Endothelial cell of umbilical vein (primary cell): ENCODE measurements at regions of chr7 and their contacts with region 1.

Region 1: DNA sequence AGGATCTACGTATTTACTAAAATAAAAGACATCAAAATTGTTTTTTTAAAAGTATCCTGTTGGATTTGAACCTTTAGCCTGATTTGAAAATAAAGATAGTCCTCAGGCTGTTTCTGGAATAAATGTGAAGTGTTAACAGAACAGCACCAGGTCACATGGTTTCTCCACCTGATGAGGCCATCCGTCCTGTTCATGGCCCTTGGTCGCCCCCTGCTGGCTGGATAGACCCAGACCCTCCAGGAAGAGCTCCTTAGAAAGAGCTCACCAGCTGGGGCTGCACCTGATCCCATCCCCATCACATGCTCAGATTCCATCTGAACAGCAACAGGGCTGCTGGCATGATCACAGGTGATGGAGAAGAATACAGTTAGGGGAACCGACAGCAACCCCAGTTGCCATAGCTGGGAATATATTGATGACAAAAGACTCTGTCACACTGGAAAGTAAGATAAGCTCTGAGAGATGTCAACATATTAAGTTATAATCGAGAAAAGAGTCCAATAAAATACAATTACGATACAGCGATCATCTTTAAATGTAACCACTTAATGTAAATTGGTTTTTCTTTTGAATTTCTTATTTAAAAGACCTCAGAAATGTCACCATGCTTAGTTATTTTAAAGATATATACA is 4.8 kb downstream of the OR2A14 start:
- DNase-seq: peak; percentile 79
- H3K4me3 ChIP-seq: no peak overlapping the region
- H3K27ac ChIP-seq: no peak overlapping the region
- H3K4me1 ChIP-seq: no peaks in the 10 kb centered on the region
- H3K27me3 ChIP-seq: no peaks in the 10 kb centered on the region
- CTCF ChIP-seq: peak; percentile 84 to 92
- POLR2A ChIP-seq: no peak

Region 2: DNA sequence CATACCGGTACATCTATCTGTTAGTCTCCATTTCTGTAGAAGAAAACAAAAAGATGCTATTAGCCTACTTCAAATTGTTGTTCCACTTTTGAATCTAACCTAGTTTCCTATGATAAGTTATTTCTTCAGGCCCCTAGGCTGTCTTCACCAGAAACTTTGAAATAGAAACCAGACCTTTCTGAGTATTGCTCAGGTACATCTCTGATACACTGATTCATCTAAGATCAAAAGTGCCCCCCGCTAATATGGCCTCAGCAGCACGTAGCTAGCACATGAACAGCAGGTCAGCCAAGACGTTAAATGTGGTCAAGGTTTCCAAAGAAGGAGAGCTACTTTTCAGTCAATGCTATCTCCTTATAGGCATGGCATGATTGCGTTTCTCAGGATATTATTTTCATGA is 393.9 kb before region 1 on chr7:
- CTCF ChIA-PET with region 1: interaction called, 77 read pairs
- POLR2A ChIA-PET with region 1: no interaction called
- dilution Hi-C with region 1: no loop called
- intact Hi-C with region 1: loop called (anchors 1 kb)
- DNase-seq: no peak
- H3K4me3 ChIP-seq: no peak overlapping the region
- H3K27ac ChIP-seq: no peak overlapping the region
- H3K4me1 ChIP-seq: no peaks in the 10 kb centered on the region
- H3K27me3 ChIP-seq: no peaks in the 10 kb centered on the region
- CTCF ChIP-seq: no peak
- POLR2A ChIP-seq: no peak

Region 3: GRCh38 chr7:143892527-143893300 is 235.1 kb before region 1 on chr7:
- CTCF ChIA-PET with region 1: interaction called, 15 read pairs
- POLR2A ChIA-PET with region 1: no interaction called
- dilution Hi-C with region 1: no loop called
- intact Hi-C with region 1: no loop called
- DNase-seq: peak; percentile 61
- H3K4me3 ChIP-seq: no peak overlapping the region
- H3K27ac ChIP-seq: no peak overlapping the region
- H3K4me1 ChIP-seq: peaks cover 15% of the 10 kb centered on the region
- H3K27me3 ChIP-seq: no peaks in the 10 kb centered on the region
- CTCF ChIP-seq: peak; percentile 36 to 46
- POLR2A ChIP-seq: no peak

Region 4: DNA sequence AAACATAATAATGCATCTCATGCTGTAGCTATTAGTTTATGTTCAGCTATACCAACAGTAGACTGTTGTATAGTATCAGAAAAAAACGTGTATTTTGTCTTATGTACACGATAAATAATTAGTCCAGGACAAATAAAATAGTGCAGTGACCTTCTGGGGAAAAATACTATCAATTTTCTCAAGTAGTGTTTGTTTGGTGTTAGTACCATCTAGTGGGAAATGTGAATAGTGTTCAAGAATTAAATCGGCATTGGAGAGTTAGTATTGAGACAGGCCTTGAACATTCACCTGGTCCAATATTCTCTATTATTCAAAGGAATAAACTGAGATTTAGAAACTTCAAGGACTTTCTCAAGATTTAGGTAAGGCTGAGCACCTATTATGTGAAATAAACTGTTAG is 100.7 kb before region 1 on chr7:
- CTCF ChIA-PET with region 1: interaction called, 6 read pairs
- POLR2A ChIA-PET with region 1: no interaction called
- dilution Hi-C with region 1: no loop called
- intact Hi-C with region 1: loop called (anchors 5 kb)
- DNase-seq: peak; percentile 37
- H3K4me3 ChIP-seq: no peak overlapping the region
- H3K27ac ChIP-seq: no peak overlapping the region
- H3K4me1 ChIP-seq: no peaks in the 10 kb centered on the region
- H3K27me3 ChIP-seq: no peaks in the 10 kb centered on the region
- CTCF ChIP-seq: peak; percentile 12 to 30
- POLR2A ChIP-seq: no peak

Region 5: DNA sequence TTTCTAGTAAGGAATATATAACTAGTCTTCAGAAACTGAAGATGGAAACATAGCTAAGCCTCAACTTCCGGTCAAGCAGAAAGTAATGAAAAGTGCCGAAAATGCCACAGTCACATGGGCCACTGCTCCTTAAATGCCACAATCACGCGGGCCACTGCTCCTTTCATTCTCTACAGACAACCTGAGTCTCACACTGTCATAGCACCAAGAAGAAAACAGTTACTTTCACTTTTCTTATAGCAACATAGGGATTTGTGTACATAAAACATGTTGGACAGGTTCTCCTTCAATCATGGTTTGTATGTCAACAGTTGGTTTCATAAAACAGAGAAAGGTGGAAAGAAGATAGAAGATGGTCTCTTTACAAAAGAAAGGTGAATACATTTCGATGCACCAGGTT is 324.2 kb after region 1 on chr7:
- CTCF ChIA-PET with region 1: no interaction called
- POLR2A ChIA-PET with region 1: no interaction called
- dilution Hi-C with region 1: no loop called
- intact Hi-C with region 1: no loop called
- DNase-seq: no peak
- H3K4me3 ChIP-seq: no peak overlapping the region
- H3K27ac ChIP-seq: no peak overlapping the region
- H3K4me1 ChIP-seq: no peaks in the 10 kb centered on the region
- H3K27me3 ChIP-seq: no peaks in the 10 kb centered on the region
- CTCF ChIP-seq: no peak
- POLR2A ChIP-seq: no peak